ENCODE measurements at regions of chr14 and their contacts with region 1.

Region 1: GRCh38 chr14:69460093-69460701 is 24.3 kb upstream of the PLEKHD1 start:
- DNase-seq: peak; percentile 69 to 87 (median 77)
- H3K4me3 ChIP-seq: no peak overlapping the region
- H3K4me3 Mint-ChIP-seq: no peak overlapping the region
- H3K27ac ChIP-seq: peak overlapping the region in 1 of 2 donors; percentile 42
- H3K27ac Mint-ChIP-seq: peak overlapping the region in 5 of 7 donors; percentile 67 to 93 (median 75)
- H3K4me1 ChIP-seq: no peaks in the 10 kb centered on the region
- H3K4me1 Mint-ChIP-seq: no peaks in the 10 kb centered on the region
- H3K27me3 ChIP-seq: no peaks in the 10 kb centered on the region
- H3K27me3 Mint-ChIP-seq: peaks cover 0 to 1% (median 0%) of the 10 kb centered on the region in 3 donors
- CTCF ChIP-seq: peak; percentile 82

Region 2: DNA sequence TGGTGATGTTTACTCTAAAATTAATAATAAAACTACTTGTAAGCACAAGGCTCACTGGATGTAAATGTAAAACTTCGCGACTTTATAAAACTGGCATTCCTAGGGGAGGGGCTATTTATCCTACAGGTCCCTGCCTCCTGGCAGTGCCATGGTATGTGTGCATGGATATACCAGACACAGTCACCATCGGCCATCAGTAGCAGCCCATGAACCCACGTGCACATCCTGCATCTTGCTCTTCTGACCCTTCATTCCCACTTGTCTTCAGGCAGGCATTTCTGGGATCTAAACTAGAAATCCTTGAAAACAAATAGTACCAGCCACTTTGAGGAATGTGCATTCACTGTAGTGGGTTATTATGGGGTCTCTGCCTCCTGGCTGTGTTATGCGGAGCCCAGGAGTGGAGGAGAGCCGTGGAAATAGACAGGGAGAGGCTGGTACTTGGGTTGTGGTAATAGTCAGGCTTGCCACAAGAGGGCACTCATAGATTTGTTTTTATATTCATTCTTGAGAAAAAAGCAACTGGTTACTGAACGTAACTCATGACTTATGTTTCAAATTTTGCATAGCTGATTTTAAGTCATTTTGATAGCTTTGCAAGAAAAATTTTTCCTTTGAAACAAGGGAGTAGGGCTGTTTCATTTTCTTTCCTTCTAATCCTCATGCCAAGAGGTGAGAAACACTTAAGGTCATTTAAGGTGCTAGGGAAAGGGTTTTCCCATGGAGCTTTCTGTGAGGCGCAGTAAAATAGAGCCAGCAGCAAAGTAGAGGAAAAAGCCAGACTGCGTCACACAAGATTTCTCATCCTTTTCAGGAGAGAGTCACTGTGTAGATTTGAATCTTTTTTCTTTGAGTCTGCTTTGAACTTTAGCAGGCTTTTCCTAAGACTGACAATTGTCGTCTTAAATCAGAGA is 217.6 kb before region 1 on chr14:
- intact Hi-C with region 1: loop called (anchors 2 kb)
- DNase-seq: peak; percentile 26 to 51 (median 47)
- H3K4me3 ChIP-seq: no peak overlapping the region
- H3K4me3 Mint-ChIP-seq: no peak overlapping the region
- H3K27ac ChIP-seq: no peak overlapping the region
- H3K27ac Mint-ChIP-seq: peak overlapping the region in 1 of 7 donors; percentile 64
- H3K4me1 ChIP-seq: no peaks in the 10 kb centered on the region
- H3K4me1 Mint-ChIP-seq: no peaks in the 10 kb centered on the region
- H3K27me3 ChIP-seq: no peaks in the 10 kb centered on the region
- H3K27me3 Mint-ChIP-seq: peaks cover 0 to 1% (median 0%) of the 10 kb centered on the region in 3 donors
- CTCF ChIP-seq: peak; percentile 82

Measured in CD14-positive monocyte (primary cell).